ENCODE measurements at regions of chr11 and their contacts with region 1.

Region 1: DNA sequence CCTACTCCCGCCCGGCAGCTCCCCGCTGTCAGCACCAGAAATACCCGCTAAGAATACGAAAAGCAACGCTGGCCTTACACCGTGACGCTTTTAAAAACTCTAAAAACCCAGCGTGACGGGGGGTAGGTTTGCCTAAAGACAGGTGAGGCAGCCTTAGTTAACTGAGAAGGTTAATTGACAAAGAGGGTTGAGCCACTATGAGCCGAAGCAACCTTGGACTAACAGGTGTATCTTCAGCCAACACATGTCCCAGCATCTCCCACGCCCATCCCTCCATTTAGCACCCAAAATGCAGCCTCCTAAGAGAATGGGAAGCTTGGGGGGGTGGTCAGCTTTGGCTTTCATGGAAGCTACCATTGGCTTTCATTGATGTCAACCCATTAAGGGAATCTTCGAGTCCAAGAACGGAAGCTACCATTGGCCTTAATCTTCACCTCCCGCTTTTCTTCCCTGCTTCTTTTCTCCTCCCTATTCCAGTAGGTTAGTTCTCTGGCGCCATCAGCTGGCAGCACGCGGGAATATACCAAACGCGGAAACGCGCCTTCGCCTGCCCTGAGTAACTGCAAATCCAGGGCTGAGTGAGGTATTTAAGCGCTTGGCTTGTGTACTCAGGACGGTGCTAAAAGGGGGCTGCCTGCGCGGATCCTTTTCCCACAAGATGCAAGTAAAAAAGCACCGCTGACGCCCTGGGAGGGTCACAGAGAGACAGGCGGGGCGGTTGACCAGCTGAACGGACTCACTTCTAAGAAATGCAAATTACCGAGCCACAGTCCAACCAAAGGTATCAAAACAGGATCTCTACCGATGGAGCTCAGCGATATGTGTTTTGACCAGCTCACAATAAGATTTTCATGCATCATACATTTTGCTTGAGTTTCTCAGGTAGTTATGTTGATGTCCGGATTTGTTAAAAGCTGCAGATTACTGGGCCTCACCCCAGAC is 38.5 kb upstream of the GLYATL1 start:
- DNase-seq: peak; percentile 73
- ATAC-seq: peak; percentile 57
- H3K4me3 ChIP-seq: no peak overlapping the region
- H3K27ac ChIP-seq: no peak overlapping the region
- H3K4me1 ChIP-seq: no peaks in the 10 kb centered on the region; the same call in 1 of the 2 replicates
- H3K27me3 ChIP-seq: no peaks in the 10 kb centered on the region
- CTCF ChIP-seq: peak; percentile 74
- POLR2A ChIP-seq: no peak
- RAD21 ChIP-seq: peak; percentile 62

Region 2: GRCh38 chr11:58629857-58630256 is 270.9 kb before region 1 on chr11:
- CTCF ChIA-PET with region 1: no interaction called
- POLR2A ChIA-PET with region 1: no interaction called
- dilution Hi-C with region 1: no loop called
- in situ Hi-C with region 1: loop called (anchors 10 kb)
- intact Hi-C with region 1: no loop called
- DNase-seq: peak; percentile 71
- ATAC-seq: peak; percentile 24; the same call in 1 of the 2 replicates
- H3K4me3 ChIP-seq: no peak overlapping the region
- H3K27ac ChIP-seq: no peak overlapping the region
- H3K4me1 ChIP-seq: peaks cover 18% of the 10 kb centered on the region
- H3K27me3 ChIP-seq: no peaks in the 10 kb centered on the region
- CTCF ChIP-seq: peak; percentile 78
- POLR2A ChIP-seq: no peak
- RAD21 ChIP-seq: peak; percentile 64

Region 3: DNA sequence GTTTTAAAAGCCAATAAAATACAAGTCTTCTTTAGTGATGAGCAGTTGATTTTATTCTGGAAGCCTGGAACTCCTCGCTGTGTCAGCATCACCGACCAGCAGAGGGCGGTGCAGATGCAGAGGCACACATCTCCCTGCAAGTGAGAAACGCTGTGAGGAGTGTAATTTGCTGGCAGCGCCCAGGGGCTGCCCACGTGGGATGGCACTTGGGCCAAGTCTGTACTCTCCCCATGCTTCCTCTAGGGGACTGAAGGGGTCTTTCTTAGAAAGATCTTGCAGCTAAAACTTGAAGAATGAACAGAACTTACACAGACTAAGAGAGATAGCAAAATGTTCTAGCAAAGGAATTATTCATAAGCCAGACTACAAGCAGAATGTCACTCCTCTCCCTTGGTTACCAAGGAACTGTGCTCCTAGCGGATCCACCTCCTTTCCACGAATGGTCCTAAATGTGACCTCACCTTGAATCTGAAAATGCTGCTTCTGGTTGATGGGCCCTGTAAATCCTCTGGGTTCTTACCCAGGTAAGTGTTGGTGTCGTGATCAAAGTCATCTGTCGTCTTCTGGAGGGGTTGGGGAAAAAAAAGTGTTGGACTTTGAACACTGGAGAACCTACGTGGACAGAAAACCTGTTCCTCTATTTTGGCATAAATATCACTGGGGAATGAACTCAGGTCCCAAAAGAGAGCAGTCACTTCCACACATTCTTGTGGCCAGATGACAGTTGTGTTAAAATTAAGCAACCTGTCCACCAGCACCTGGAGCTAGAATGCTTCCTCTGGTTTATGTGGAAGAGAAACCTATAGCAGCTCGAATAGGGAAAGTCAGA is 246.5 kb before region 1 on chr11:
- CTCF ChIA-PET with region 1: no interaction called
- POLR2A ChIA-PET with region 1: no interaction called
- dilution Hi-C with region 1: no loop called
- in situ Hi-C with region 1: no loop called
- intact Hi-C with region 1: loop called (anchors 1 kb)
- DNase-seq: peak; percentile 72
- ATAC-seq: peak; percentile 98
- H3K4me3 ChIP-seq: no peak overlapping the region
- H3K27ac ChIP-seq: no peak overlapping the region
- H3K4me1 ChIP-seq: 0 out of 2 replicates have a peak, but pooled peaks cover 2% of the 10 kb centered on the region
- H3K27me3 ChIP-seq: no peaks in the 10 kb centered on the region
- CTCF ChIP-seq: peak; percentile 89
- POLR2A ChIP-seq: no peak
- RAD21 ChIP-seq: peak; percentile 72

Region 4: DNA sequence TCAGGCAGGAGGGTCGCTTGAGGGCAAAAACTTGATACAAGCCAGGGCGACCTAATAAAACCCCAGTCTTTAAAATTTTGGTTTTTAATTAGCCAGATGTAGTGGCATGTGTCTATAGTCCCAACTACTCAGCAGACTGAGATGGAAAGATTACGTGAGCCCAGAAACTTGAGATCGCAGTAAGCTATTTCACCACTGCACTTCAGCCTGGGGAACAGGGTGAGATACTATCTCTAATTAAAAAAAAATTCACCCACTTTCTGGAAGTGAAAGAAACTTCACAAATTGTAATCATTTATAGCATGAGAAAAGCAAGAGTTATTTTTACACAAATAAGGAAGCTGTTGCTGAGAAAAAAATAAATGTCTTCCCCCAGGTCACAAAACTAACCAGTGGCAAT is 55.4 kb before region 1 on chr11:
- CTCF ChIA-PET with region 1: no interaction called
- POLR2A ChIA-PET with region 1: no interaction called
- dilution Hi-C with region 1: no loop called
- in situ Hi-C with region 1: no loop called
- intact Hi-C with region 1: loop called (anchors 1 kb)
- DNase-seq: no peak
- ATAC-seq: no peak
- H3K4me3 ChIP-seq: no peak overlapping the region
- H3K27ac ChIP-seq: no peak overlapping the region
- H3K4me1 ChIP-seq: no peaks in the 10 kb centered on the region
- H3K27me3 ChIP-seq: no peaks in the 10 kb centered on the region
- CTCF ChIP-seq: no peak
- POLR2A ChIP-seq: no peak
- RAD21 ChIP-seq: no peak

Measured in IMR-90 (cell line).